GM13977 (cell line): ENCODE measurements at regions of chr1 and their contacts with region 1.

Region 1: DNA sequence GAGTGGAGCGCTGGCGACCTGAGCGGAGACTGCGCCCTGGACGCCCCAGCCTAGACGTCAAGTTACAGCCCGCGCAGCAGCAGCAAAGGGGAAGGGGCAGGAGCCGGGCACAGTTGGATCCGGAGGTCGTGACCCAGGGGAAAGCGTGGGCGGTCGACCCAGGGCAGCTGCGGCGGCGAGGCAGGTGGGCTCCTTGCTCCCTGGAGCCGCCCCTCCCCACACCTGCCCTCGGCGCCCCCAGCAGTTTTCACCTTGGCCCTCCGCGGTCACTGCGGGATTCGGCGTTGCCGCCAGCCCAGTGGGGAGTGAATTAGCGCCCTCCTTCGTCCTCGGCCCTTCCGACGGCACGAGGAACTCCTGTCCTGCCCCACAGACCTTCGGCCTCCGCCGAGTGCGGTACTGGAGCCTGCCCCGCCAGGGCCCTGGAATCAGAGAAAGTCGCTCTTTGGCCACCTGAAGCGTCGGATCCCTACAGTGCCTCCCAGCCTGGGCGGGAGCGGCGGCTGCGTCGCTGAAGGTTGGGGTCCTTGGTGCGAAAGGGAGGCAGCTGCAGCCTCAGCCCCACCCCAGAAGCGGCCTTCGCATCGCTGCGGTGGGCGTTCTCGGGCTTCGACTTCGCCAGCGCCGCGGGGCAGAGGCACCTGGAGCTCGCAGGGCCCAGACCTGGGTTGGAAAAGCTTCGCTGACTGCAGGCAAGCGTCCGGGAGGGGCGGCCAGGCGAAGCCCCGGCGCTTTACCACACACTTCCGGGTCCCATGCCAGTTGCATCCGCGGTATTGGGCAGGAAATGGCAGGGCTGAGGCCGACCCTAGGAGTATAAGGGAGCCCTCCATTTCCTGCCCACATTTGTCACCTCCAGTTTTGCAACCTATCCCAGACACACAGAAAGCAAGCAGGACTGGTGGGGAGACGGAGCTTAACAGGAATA is 4.2 kb downstream of the TFAP2E start:
- DNase-seq: peak; percentile 82
- CTCF ChIP-seq: peak; percentile 3

Region 2: GRCh38 chr1:35715568-35716002 is 138.2 kb after region 1 on chr1:
- in situ Hi-C with region 1: loop called (anchors 10 kb)
- DNase-seq: peak; percentile 87
- CTCF ChIP-seq: peak; percentile 90

Region 3: DNA sequence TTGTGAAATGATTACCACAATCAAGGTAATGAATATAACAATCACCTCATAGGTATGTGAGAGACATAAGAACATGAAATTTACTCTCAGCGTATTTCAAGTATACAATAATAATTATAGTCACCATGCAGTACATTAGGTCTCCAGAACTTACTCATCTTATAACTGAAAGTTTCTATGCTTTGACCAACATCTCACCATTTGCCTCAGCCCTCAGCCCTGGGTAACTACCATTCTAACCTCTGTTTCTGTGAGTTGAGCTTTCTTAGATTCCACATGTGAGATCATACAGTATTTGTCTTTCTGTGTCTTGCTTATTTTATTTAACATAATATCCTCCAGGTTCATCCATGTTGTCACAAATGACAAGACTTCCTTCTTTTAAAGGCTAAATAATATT is 410.9 kb after region 1 on chr1:
- in situ Hi-C with region 1: no loop called
- DNase-seq: no peak
- CTCF ChIP-seq: no peak